ENCODE measurements at regions of chr20 and their contacts with region 1.

Region 1: GRCh38 chr20:53915446-53916172 is 154.8 kb downstream of the BCAS1 start:
- DNase-seq: peak; percentile 96
- H3K4me3 ChIP-seq: peak overlapping the region; percentile 36 to 58 (median 56)
- H3K27ac ChIP-seq: peak overlapping the region; percentile 79 to 87 (median 80)
- H3K4me1 ChIP-seq: peaks cover 0 to 38% (median 33%) of the 10 kb centered on the region in 4 donors
- H3K27me3 ChIP-seq: no peaks in the 10 kb centered on the region
- CTCF ChIP-seq: peak; percentile 88 to 94 (median 90)
- EP300 ChIP-seq: no peak
- POLR2A ChIP-seq: no peak

Region 2: DNA sequence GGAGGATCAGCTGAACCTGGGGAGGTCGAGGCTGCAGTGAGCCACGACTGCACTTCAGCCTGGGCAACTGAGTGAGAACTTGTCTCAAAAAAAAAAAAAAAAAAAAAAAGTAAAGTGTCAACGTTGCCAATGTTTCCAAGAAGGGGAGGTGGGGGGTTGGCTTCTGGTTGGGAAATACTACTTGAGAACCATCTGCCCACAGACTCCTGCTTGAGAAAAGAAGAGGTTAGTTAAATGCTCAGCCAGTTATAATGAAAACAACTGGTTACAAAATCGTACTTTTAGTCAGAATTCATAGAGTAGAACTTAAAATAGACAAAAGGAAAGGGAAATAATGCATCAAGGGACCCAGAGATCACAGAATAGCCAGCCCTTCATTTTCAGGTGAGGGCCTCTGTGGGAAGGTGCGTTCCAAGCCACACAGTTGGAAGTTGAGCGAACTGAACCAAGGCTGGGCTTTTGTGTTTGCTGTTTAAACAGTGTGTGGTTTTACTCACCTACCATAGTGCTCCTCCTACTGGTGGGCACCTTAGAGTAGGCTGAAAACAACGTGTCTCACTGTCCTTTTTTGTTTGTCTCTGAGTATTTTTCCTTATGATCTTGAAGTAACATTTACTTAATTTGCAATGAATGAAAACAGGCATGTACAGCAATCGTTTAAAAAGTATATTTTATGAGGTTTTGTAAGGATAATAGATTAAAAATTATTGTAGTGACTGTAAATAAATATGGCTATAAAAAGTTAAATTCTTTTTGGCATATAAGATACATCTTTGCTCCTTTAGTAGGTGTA is 45.9 kb before region 1 on chr20:
- intact Hi-C with region 1: loop called (anchors 5 kb)
- DNase-seq: peak; percentile 71
- H3K4me3 ChIP-seq: no peak overlapping the region
- H3K27ac ChIP-seq: peak overlapping the region in 3 of 4 donors; percentile 16 to 57 (median 42)
- H3K4me1 ChIP-seq: peaks cover 0 to 42% (median 35%) of the 10 kb centered on the region in 4 donors
- H3K27me3 ChIP-seq: peaks cover 0 to 3% (median 0%) of the 10 kb centered on the region in 3 donors
- CTCF ChIP-seq: peak; percentile 56 to 85 (median 72)
- EP300 ChIP-seq: no peak
- POLR2A ChIP-seq: no peak